Testis (tissue), 5 donors: ENCODE measurements at regions of chr5 and their contacts with region 1.

Region 1: GRCh38 chr5:64612344-64612961 is 77.8 kb upstream of the SHISAL2B start:
- DNase-seq: peak; percentile 67
- H3K4me3 ChIP-seq: no peak overlapping the region
- H3K27ac ChIP-seq: no peak overlapping the region
- H3K4me1 ChIP-seq: no peaks in the 10 kb centered on the region
- H3K27me3 ChIP-seq: no peaks in the 10 kb centered on the region
- CTCF ChIP-seq: peak; percentile 43 to 74 (median 59)
- POLR2A ChIP-seq: no peak

Region 2: GRCh38 chr5:64229163-64229774 is 383.2 kb before region 1 on chr5:
- intact Hi-C with region 1: loop called (anchors 10 kb)
- DNase-seq: no peak
- H3K4me3 ChIP-seq: no peak overlapping the region
- H3K27ac ChIP-seq: no peak overlapping the region
- H3K4me1 ChIP-seq: no peaks in the 10 kb centered on the region
- H3K27me3 ChIP-seq: no peaks in the 10 kb centered on the region
- CTCF ChIP-seq: peak; percentile 32 to 75 (median 37)
- POLR2A ChIP-seq: no peak